Activated B cell treated with CpG ODN at 0.5 μM for 24 hours (primary cell): ENCODE measurements at regions of chr1 and their contacts with region 1.

Region 1: DNA sequence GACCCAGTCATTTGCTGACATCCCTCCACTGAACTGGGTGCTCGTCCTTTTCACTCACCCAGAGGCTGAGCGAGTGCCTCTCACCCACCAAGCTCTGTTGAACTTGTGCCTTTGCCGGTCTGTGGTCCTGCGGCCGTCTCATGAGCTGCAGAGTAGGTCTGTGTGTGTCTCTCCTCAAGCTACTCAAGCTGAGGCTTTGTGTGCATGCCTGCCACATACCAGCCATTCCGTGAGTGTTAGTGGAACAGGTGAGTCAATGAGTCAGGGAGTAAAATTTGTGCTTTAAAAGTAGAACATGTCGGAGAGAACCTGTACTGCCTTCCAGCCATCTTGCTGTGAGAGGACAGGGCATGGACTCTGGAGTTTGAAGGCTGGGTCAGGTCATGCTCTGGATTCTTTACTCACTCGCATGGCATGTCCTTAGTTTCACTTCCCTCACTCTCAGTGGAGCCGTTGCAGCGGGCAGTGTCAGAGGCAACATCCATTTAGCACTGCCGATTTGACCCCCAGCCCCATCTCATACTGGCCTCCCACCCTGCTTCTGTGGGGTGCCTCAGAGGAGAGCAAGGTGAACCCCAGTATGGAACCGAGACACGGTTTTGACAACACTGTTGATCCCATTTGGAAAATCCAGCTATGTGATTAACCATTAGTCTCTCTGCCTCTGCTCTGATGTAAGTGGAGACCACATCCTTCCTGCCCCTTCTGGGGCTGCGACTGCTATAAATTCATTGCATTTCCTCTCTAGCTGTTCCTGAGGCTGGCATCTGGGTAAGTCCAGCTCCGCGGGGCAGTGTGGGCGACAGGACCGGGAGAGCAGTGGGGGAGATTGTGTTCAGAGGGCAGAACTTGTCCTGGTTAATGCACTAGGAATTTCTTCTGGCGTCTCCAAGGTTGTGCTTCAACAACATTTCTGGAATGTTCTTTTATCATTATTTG is at the start of gene NLRP3:
- DNase-seq: no peak
- ATAC-seq: peak; percentile 76
- H3K4me3 Mint-ChIP-seq: peak within 1 kb of the TSS; percentile 79
- H3K27ac Mint-ChIP-seq: peak within 1 kb of the TSS; percentile 32
- H3K4me1 Mint-ChIP-seq: peaks cover 35% of the 10 kb centered on the region
- H3K27me3 Mint-ChIP-seq: no peaks in the 10 kb centered on the region
- CTCF ChIP-seq: no peak
- total RNA-seq, gene NLRP3: 0.44 and 0.73 TPM in 2 replicates

Region 2: GRCh38 chr1:247401310-247402119 is 14.2 kb before region 1 on chr1:
- CTCF ChIA-PET with region 1: no interaction called
- POLR2A ChIA-PET with region 1: no interaction called
- intact Hi-C with region 1: loop called (anchors 2 kb)
- DNase-seq: no peak
- ATAC-seq: no peak
- H3K4me3 Mint-ChIP-seq: no peak overlapping the region
- H3K27ac Mint-ChIP-seq: no peak overlapping the region
- H3K4me1 Mint-ChIP-seq: peaks cover 12% of the 10 kb centered on the region
- H3K27me3 Mint-ChIP-seq: no peaks in the 10 kb centered on the region
- CTCF ChIP-seq: no peak